ENCODE measurements at regions of chr3 and their contacts with region 1.

Region 1: GRCh38 chr3:179929091-179929529 is 107.6 kb downstream of the PEX5L start:
- DNase-seq: peak; percentile 31
- H3K4me3 ChIP-seq: no peak overlapping the region
- CTCF ChIP-seq: peak; percentile 69

Region 2: GRCh38 chr3:179942553-179943075 is 13.5 kb after region 1 on chr3:
- CTCF ChIA-PET with region 1: interaction called, 15 read pairs
- POLR2A ChIA-PET with region 1: no interaction called
- DNase-seq: no peak
- H3K4me3 ChIP-seq: peak overlapping the region; percentile 51
- CTCF ChIP-seq: no peak

Region 3: DNA sequence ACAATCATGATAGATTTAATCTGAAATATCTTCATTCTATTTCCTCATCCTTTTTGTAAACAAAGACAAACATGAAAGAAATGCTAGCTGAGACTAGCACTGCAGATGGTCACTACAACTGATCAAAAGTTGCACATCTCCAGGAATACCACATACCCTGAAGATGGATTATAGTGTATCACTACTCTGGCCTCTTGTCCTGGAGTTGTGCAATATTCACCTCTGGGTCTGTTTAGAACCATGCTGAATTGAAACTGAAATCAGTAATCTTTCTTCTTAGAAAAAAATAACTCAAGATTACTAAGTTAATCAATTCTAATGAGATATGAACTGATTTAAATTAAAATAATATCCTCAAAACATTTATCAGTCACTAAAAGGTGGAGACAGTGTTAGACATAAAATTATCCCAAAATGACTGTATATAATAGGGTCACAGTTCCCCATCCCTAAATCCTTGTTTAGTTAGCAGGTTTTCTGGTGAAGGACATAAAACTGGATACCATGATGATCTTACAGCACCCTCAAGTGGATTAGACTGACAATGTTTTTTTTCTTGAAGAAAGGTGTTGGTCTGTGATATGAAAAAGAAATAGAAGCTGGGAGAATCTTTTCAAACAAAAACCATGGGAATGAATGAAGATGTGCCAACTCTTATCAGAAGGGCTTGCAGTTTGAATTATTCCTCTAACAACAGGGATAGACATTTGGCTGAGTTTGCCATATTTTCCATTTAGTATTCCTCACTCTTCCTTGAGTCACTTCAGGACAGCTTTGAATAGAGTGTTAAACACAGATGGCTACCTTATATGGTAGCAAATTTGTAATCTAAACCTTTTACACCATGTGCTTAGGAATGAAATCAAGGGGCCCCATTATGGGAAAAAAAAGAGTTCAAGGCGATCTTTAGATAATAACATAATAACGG is 665.8 kb after region 1 on chr3:
- CTCF ChIA-PET with region 1: interaction called, 79 read pairs
- POLR2A ChIA-PET with region 1: no interaction called
- DNase-seq: peak; percentile 26
- H3K4me3 ChIP-seq: no peak overlapping the region
- CTCF ChIP-seq: peak; percentile 47

Region 4: GRCh38 chr3:180601688-180602666 is 672.9 kb after region 1 on chr3 and contains the start of gene TTC14:
- CTCF ChIA-PET with region 1: interaction called, 79 read pairs
- POLR2A ChIA-PET with region 1: no interaction called
- DNase-seq: peak; percentile 63
- H3K4me3 ChIP-seq: peak within 1 kb of the TSS; percentile 86
- CTCF ChIP-seq: no peak